Activated CD4-positive, alpha-beta T cell treated with anti-CD3 and anti-CD28 coated beads for 36 hours (primary cell): ENCODE measurements at regions of chr7 and their contacts with region 1.

Region 1: GRCh38 chr7:158976849-158977593 is 120.7 kb downstream of the DYNC2I1 start:
- DNase-seq: peak; percentile 94
- ATAC-seq: peak; percentile 82
- H3K4me3 Mint-ChIP-seq: peak overlapping the region; percentile 69
- H3K27ac Mint-ChIP-seq: peak overlapping the region; percentile 93
- H3K4me1 Mint-ChIP-seq: peaks cover 20% of the 10 kb centered on the region
- H3K27me3 Mint-ChIP-seq: no peaks in the 10 kb centered on the region

Region 2: DNA sequence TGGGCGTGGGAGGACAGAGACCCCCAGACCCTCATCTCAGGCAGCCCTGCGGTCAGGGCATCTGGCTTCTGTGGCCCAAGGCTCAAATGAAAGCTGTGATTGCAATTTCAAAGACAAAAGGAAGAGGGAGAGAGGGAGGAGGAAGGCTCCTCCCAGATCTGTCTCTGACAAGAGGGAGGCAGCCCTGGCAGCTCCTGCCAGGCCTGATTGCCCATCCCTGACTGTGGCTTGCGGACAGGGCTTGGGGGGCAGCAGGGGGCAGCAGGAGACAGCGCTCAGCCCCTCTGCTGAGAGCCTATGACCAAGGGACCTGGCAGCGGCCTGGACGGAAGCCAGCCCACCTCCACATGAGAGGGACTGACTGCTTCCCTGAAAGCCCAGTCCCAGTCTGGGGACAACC is 481.2 kb before region 1 on chr7:
- CTCF ChIA-PET with region 1: no interaction called
- POLR2A ChIA-PET with region 1: no interaction called
- intact Hi-C with region 1: loop called (anchors 2 to 10 kb)
- DNase-seq: peak; percentile 47
- ATAC-seq: peak; percentile 66
- H3K4me3 Mint-ChIP-seq: no peak overlapping the region
- H3K27ac Mint-ChIP-seq: no peak overlapping the region
- H3K4me1 Mint-ChIP-seq: no peaks in the 10 kb centered on the region
- H3K27me3 Mint-ChIP-seq: peaks cover 11% of the 10 kb centered on the region

Region 3: DNA sequence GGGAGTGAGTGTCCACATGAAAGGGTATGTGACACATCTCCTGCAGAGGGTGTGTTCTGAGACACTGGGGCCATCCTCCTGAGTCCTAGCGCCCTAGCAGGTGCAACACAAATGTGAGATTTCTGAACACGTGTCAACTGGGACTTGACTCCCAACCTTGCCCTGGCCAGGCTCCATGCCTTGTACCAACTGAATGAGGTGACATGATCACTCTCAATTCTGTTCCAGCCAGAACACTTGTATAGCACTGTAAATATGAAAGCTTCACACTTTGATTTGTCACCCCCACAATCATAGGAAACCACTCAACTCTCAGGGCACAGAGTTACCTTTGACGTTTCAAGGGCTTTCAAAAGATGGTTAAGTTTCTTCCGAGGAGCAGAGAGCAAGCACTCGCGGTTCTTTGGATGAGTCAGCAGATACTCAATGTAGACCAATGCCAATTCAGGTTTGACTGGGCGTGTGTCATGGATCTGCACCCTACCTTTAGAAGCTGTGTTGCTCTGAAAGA is 321.0 kb before region 1 on chr7:
- CTCF ChIA-PET with region 1: interaction called, 3 read pairs
- POLR2A ChIA-PET with region 1: no interaction called
- intact Hi-C with region 1: loop called in 1 of 2 experiments (anchors 1 kb)
- DNase-seq: peak; percentile 87
- ATAC-seq: peak; percentile 93
- H3K4me3 Mint-ChIP-seq: no peak overlapping the region
- H3K27ac Mint-ChIP-seq: peak overlapping the region; percentile 83
- H3K4me1 Mint-ChIP-seq: peaks cover 31% of the 10 kb centered on the region
- H3K27me3 Mint-ChIP-seq: no peaks in the 10 kb centered on the region

Region 4: DNA sequence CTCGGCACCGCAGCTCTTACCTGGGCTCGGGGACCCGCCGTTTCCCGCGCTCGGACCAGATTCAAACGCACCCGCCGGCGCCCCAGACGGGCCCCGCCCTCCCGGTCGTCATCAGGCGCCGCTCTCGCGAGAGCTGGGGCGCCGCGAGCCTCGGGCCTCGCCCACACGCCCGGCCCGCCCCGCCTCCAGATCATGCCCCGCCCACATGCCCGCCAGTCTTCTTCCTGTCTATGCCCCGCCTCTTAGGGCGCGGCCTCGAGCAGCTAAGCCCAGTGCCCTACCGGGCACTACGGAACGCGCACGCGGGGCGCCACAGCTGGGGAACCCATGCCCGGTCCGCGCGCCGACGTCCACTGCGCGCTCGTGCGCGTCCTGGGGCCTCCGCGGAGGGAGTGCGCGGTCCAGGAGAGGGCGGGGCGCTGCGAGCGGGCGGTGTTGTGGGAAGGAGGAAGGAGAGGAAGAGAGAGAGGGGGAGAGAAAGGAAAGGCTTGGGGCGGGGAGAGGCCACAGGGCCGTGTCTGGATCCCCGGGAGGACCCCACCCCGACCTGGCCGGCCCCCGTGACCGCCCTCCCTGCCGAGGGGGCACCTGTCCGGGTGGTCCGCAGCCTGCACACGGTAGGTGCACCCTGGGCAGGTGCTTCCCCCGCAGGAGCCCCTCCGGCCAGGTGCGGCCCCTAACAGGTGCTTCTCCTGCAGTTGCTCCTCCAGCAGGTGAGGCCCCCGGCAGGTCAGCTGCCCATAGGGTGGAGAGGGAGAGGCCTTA is 272.1 kb before region 1 on chr7 and contains the start of gene NCAPG2:
- CTCF ChIA-PET with region 1: interaction called, 3 read pairs
- POLR2A ChIA-PET with region 1: interaction called, 5 read pairs
- intact Hi-C with region 1: loop called in 1 of 2 experiments (anchors 2 kb)
- DNase-seq: peak; percentile 99
- ATAC-seq: peak; percentile 98
- H3K4me3 Mint-ChIP-seq: peak within 1 kb of the TSS; percentile 85
- H3K27ac Mint-ChIP-seq: peak within 1 kb of the TSS; percentile 81
- H3K4me1 Mint-ChIP-seq: peaks cover 44% of the 10 kb centered on the region
- H3K27me3 Mint-ChIP-seq: no peaks in the 10 kb centered on the region
- total RNA-seq, gene NCAPG2: 85.4 to 127 TPM

Region 5: DNA sequence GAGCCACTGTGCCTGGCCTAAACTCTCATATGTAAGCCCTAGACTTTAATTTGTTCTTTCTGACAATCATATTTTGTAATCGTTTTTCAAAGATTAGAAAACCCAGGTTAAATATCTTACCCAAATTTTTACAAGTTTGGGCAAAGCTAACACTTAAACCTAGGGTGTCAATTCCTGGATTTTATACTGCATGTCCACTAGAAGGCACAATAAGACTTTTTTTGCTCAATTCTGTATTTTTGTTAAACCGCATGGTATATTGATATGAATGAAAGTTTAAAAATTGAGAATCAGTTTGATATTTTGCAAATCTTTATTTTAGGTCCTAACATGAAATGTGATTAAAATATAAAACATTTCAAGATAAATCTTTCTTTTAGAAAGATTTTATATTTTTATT is 91.4 kb before region 1 on chr7:
- CTCF ChIA-PET with region 1: interaction called, 7 read pairs
- POLR2A ChIA-PET with region 1: no interaction called
- intact Hi-C with region 1: loop called in 1 of 2 experiments (anchors 1 kb)
- DNase-seq: no peak
- ATAC-seq: no peak
- H3K4me3 Mint-ChIP-seq: no peak overlapping the region
- H3K27ac Mint-ChIP-seq: no peak overlapping the region
- H3K4me1 Mint-ChIP-seq: no peaks in the 10 kb centered on the region
- H3K27me3 Mint-ChIP-seq: no peaks in the 10 kb centered on the region

Region 6: GRCh38 chr7:158991824-158992583 is 15.0 kb after region 1 on chr7:
- CTCF ChIA-PET with region 1: interaction called, 12 read pairs
- POLR2A ChIA-PET with region 1: no interaction called
- intact Hi-C with region 1: no loop called
- DNase-seq: peak; percentile 37
- ATAC-seq: peak; percentile 70
- H3K4me3 Mint-ChIP-seq: no peak overlapping the region
- H3K27ac Mint-ChIP-seq: no peak overlapping the region
- H3K4me1 Mint-ChIP-seq: peaks cover 16% of the 10 kb centered on the region
- H3K27me3 Mint-ChIP-seq: peaks cover 41% of the 10 kb centered on the region

Region 7: GRCh38 chr7:159068488-159068811 is 91.4 kb after region 1 on chr7:
- CTCF ChIA-PET with region 1: no interaction called
- POLR2A ChIA-PET with region 1: no interaction called
- intact Hi-C with region 1: no loop called
- DNase-seq: peak; percentile 31
- ATAC-seq: peak; percentile 59
- H3K4me3 Mint-ChIP-seq: no peak overlapping the region
- H3K27ac Mint-ChIP-seq: no peak overlapping the region
- H3K4me1 Mint-ChIP-seq: peaks cover 25% of the 10 kb centered on the region
- H3K27me3 Mint-ChIP-seq: no peaks in the 10 kb centered on the region